B cell (primary cell): ENCODE measurements at regions of chr5 and their contacts with region 1.

Region 1: DNA sequence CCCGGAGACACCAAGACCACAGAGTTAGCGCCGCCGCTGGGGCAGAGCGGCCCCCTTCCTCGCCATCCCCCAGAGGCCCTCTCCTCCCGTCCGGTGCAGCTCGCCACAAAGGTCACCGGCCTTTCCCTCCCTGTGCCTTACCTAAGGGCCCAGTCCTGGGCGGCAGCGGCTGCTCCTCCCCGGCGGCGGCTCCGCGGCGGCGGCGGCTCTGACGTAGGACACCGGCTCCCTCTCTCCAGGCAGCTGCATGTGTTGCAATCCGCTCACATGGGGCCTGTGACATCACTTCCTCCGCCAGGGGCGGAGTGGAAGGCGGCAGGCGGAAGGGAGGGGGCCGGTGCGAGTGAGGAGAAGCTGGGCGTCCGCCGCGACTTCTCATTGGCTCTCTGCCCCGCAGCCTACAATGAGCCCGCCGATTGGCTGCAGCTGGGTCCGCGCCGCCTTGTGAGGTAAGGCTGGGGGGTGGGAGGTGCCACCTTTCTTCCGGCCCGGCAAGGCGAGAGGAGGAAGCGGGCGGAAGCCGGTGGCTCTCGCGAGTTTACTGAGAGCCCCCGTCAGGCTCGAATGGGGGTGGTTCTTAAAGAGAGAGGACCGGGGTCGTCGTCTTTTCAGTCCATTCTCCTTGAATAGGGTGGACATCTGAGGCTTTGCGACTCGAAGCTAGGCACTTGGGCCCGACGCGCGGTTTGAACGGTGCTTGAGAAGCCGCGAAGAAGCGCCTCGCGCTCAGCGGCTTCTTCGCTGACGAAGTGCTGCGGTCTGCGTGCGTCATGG is at the start of gene ETF1:
- DNase-seq: peak; percentile 100
- ATAC-seq: peak; percentile 91
- H3K4me3 ChIP-seq: peak within 1 kb of the TSS; percentile 92 to 99 (median 95)
- H3K4me3 Mint-ChIP-seq: peak within 1 kb of the TSS; percentile 94
- H3K27ac ChIP-seq: peak within 1 kb of the TSS; percentile 100
- H3K27ac Mint-ChIP-seq: peak within 1 kb of the TSS; percentile 100
- H3K4me1 ChIP-seq: peaks cover 33 to 46% of the 10 kb centered on the region in 2 donors
- H3K4me1 Mint-ChIP-seq: peaks cover 74% of the 10 kb centered on the region
- H3K27me3 ChIP-seq: no peaks in the 10 kb centered on the region
- H3K27me3 Mint-ChIP-seq: no peaks in the 10 kb centered on the region
- CTCF ChIP-seq: no peak
- total RNA-seq, gene ETF1: 50.5 and 50.8 TPM in 2 replicates

Region 2: DNA sequence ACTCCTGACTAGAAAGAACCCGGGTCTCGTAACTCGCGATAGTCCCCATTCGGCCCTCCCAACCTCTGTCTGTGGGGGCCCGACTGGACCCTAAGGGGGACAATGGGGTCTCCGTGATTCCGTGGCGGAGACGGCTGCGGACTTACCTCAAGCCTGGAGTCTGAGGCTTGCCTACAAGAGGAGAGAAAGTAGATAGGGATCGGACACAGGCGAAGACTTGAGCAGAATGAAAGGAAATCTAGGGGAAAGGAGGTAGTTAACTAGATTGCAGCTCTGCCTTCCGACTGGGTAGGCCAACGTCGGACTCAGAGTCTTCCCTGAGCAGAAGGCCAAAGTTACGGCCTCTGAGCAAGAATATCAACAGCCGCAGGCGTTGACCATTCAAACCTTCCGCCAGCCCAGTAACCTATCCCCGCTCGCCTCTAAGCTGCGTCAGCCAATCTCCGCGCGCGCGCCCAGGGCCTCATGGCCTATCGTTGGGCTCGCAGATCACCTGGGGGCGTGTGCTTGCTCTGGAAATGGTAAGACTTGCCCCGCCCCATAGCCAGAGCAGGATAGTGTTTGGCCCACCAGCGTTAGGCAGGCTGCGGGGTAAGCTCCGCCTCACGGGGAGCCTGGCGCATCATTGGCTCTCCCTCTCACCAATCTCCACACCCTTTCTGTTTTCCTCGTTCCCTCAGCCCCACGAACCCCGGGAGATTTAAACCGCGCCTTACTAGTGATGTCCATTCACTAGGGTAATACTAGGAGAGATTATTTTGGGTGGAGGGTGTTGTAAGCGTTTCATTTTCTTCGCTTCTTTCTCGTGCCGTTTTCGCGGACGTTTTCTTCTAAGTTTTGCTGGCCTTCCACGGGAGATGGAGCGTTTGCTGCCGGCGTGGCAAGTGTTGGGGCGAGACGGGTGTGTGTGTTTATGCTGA is 211.4 kb before region 1 on chr5 and contains the start of gene CDC25C:
- CTCF ChIA-PET with region 1: no interaction called
- POLR2A ChIA-PET with region 1: no interaction called
- intact Hi-C with region 1: loop called (anchors 1 kb)
- DNase-seq: peak; percentile 97
- ATAC-seq: peak; percentile 100
- H3K4me3 ChIP-seq: peak within 1 kb of the TSS; percentile 60 to 75 (median 72)
- H3K4me3 Mint-ChIP-seq: peak within 1 kb of the TSS; percentile 87
- H3K27ac ChIP-seq: peak within 1 kb of the TSS in 1 of 2 donors; percentile 23
- H3K27ac Mint-ChIP-seq: peak within 1 kb of the TSS; percentile 61
- H3K4me1 ChIP-seq: peaks cover 7 to 15% of the 10 kb centered on the region in 2 donors
- H3K4me1 Mint-ChIP-seq: peaks cover 14% of the 10 kb centered on the region
- H3K27me3 ChIP-seq: no peaks in the 10 kb centered on the region
- H3K27me3 Mint-ChIP-seq: no peaks in the 10 kb centered on the region
- CTCF ChIP-seq: no peak
- total RNA-seq, gene CDC25C: not detected in 2 replicates

Region 3: GRCh38 chr5:138337685-138338410 is 205.3 kb before region 1 on chr5 and contains the start of gene FAM53C:
- CTCF ChIA-PET with region 1: interaction called, 3 read pairs
- POLR2A ChIA-PET with region 1: interaction called, 17 read pairs
- intact Hi-C with region 1: loop called (anchors 1 kb)
- DNase-seq: peak; percentile 99
- ATAC-seq: peak; percentile 82
- H3K4me3 ChIP-seq: peak within 1 kb of the TSS; percentile 55 to 90 (median 67)
- H3K4me3 Mint-ChIP-seq: peak within 1 kb of the TSS; percentile 92
- H3K27ac ChIP-seq: peak within 1 kb of the TSS; percentile 96 to 99
- H3K27ac Mint-ChIP-seq: peak within 1 kb of the TSS; percentile 100
- H3K4me1 ChIP-seq: peaks cover 22 to 25% of the 10 kb centered on the region in 2 donors
- H3K4me1 Mint-ChIP-seq: peaks cover 35% of the 10 kb centered on the region
- H3K27me3 ChIP-seq: no peaks in the 10 kb centered on the region
- H3K27me3 Mint-ChIP-seq: no peaks in the 10 kb centered on the region
- CTCF ChIP-seq: no peak
- total RNA-seq, gene FAM53C: 29.3 and 29.8 TPM in 2 replicates

Region 4: DNA sequence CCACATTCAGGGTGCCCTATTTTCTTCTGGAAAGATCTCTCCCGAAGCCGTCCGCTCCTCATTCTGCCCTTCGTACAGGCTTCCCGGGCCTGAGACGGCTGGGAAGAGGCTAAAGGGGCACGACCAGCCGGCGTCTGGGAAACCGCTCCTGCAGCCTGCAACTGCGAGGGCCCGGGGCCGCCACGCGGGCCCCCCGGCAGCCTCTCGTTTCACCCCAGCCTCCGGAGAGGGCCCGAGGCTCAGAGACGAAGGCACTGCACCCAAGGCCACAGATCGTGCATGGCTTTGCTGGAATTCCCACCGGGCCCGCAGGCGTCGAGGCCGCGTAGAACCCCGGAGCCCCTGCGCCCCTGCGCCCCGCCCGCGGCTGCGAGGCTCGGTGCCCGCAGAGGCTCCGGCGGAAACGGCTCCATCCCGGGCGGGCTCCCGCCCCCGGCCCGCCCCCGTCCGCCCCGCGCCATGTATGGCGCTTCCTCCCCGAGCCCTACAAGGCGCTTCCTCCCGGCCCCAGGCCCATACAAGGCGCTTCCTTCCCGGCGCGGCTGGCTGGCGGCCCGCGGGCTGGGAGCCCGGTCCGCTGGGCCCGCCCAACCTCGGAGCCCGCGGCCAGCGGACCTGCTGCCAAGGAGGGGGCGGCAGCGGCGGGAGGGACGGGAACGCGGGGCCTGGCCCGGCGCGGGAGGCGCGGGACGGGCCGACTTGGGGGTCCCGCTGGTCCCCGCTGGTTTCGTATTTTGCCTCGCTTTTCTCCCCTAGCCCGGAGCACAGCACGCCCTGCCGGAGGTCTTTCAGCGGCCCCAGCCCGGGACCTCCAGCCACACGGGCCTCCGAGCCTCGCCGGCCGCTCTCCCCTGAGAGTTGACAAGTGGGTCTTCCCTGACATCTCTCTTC is 51.2 kb before region 1 on chr5:
- CTCF ChIA-PET with region 1: no interaction called
- POLR2A ChIA-PET with region 1: no interaction called
- intact Hi-C with region 1: loop called (anchors 1 kb)
- DNase-seq: peak; percentile 89
- ATAC-seq: peak; percentile 99
- H3K4me3 ChIP-seq: peak overlapping the region in 4 of 5 experiments; percentile 36 to 61 (median 56)
- H3K4me3 Mint-ChIP-seq: peak overlapping the region; percentile 93
- H3K27ac ChIP-seq: no peak overlapping the region
- H3K27ac Mint-ChIP-seq: peak overlapping the region; percentile 63
- H3K4me1 ChIP-seq: peaks cover 19% of the 10 kb centered on the region in 2 donors
- H3K4me1 Mint-ChIP-seq: peaks cover 6% of the 10 kb centered on the region
- H3K27me3 ChIP-seq: peaks cover 0 to 51% (median 29%) of the 10 kb centered on the region in 4 experiments
- H3K27me3 Mint-ChIP-seq: peaks cover 29% of the 10 kb centered on the region
- CTCF ChIP-seq: no peak

Region 5: DNA sequence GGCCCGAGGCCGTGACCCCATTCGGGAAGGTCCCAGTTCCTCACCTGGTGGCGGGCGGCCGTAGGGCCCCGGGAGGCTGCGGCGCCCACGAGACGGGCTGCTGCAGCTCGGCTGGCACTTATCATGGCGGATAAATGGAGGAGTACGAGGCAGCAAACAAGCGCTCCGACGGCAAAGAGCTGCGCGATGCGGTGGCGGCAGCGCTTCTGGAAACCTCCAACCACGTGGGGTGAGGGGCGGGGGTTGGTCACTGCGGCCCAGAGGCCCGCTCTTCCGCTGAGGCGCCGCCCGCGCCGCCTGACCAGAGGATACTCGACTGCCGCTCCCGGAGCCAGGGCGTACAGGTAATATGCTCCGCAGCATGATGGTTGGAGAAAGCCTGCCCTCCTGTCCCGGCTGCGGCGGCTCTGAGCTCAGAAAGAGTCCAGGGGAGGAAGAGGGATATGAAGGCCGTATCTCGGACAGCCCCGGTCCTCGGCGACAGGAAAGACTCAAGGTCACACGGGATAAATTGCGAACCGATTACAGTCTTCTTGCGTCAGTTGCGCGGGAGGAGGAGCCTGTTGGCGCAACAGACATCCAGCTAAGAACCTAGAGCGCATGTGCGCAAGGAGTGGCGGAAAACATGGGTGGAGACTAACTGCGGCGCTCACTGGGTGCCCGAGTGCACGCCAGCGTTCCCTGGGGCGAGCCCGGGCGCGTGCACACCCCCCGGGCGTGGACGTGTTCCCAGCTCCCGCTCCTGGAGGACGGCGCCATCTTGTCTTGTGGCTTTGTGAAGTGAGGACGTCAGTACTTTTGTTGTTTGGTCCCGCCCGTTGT is 32.3 kb after region 1 on chr5 and contains the start of gene HSPA9:
- CTCF ChIA-PET with region 1: interaction called, 23 read pairs
- POLR2A ChIA-PET with region 1: interaction called, 32 read pairs
- intact Hi-C with region 1: loop called (anchors 1 kb)
- DNase-seq: peak; percentile 100
- ATAC-seq: peak; percentile 85
- H3K4me3 ChIP-seq: peak within 1 kb of the TSS; percentile 80 to 98 (median 96)
- H3K4me3 Mint-ChIP-seq: peak within 1 kb of the TSS; percentile 96
- H3K27ac ChIP-seq: peak within 1 kb of the TSS; percentile 99 to 100
- H3K27ac Mint-ChIP-seq: peak within 1 kb of the TSS; percentile 100
- H3K4me1 ChIP-seq: peaks cover 16% of the 10 kb centered on the region in 2 donors
- H3K4me1 Mint-ChIP-seq: peaks cover 30% of the 10 kb centered on the region
- H3K27me3 ChIP-seq: no peaks in the 10 kb centered on the region
- H3K27me3 Mint-ChIP-seq: no peaks in the 10 kb centered on the region
- CTCF ChIP-seq: no peak
- total RNA-seq, gene HSPA9: 139 and 142 TPM in 2 replicates

Region 6: GRCh38 chr5:140113699-140114263 is 1570.6 kb after region 1 on chr5 and contains the start of gene PURA:
- CTCF ChIA-PET with region 1: no interaction called
- POLR2A ChIA-PET with region 1: no interaction called
- intact Hi-C with region 1: loop called (anchors 10 kb)
- DNase-seq: peak; percentile 96
- ATAC-seq: peak; percentile 91
- H3K4me3 ChIP-seq: peak within 1 kb of the TSS; percentile 49 to 82 (median 78)
- H3K4me3 Mint-ChIP-seq: peak within 1 kb of the TSS; percentile 98
- H3K27ac ChIP-seq: peak within 1 kb of the TSS; percentile 72 to 87
- H3K27ac Mint-ChIP-seq: peak within 1 kb of the TSS; percentile 99
- H3K4me1 ChIP-seq: peaks cover 40 to 58% of the 10 kb centered on the region in 2 donors
- H3K4me1 Mint-ChIP-seq: peaks cover 71% of the 10 kb centered on the region
- H3K27me3 ChIP-seq: peaks cover 5 to 19% (median 11%) of the 10 kb centered on the region in 4 experiments
- H3K27me3 Mint-ChIP-seq: peaks cover 11% of the 10 kb centered on the region
- CTCF ChIP-seq: peak; percentile 17
- total RNA-seq, gene PURA: 23.5 and 26.0 TPM in 2 replicates